Activated naive CD4-positive, alpha-beta T cell treated with anti-CD3 and anti-CD28 coated beads for 36 hours (primary cell): ENCODE measurements at regions of chr12 and their contacts with region 1.

Region 1: GRCh38 chr12:13196130-13196921 is at the start of gene EMP1:
- DNase-seq: peak; percentile 93
- H3K4me3 Mint-ChIP-seq: peak within 1 kb of the TSS; percentile 72
- H3K27ac Mint-ChIP-seq: peak within 1 kb of the TSS; percentile 38
- H3K4me1 Mint-ChIP-seq: peaks cover 20% of the 10 kb centered on the region
- H3K27me3 Mint-ChIP-seq: peaks cover 4% of the 10 kb centered on the region
- total RNA-seq, gene EMP1: 3.0 to 4.0 TPM

Region 2: DNA sequence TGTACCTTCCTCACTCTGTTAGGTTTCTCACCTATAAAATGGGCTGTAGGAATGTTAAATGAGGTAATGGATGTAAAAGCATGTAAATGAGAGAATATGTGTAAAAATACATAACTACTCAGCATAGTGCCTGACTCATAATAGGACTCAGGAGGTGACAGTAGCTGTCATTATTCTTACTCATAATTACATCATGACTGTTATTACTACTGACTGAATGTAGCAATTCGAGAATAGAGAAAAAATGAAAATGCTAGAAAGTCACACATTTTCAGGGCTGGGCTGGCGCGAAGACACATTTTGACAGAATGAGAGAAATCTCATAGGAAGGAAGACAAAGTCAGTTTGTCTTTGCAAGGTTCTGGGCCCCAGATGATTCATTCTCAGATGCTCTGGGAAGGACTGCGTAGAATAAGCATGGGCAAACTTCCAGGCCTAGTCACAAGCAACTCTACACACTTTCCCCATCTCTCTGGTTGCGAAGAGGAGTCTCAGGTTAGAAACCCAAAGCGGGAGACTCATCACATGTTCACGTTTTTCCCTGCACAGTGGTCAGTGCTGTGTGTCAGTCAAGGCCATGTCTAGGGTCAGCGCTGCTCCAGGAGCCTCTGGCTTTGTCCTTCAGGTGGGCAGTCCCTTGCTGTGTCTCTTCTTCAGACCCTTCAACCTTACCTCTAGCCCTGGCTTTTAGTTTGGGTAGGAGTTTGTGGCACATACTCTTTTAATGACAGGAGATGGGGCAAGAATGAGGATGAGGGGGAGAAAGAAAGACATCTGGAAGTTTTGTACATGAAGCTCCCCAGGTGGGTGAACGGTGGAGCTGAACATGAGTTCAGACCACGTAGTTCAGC is 296.6 kb before region 1 on chr12:
- CTCF ChIA-PET with region 1: no interaction called
- intact Hi-C with region 1: loop called (anchors 1 kb)
- DNase-seq: peak; percentile 91
- H3K4me3 Mint-ChIP-seq: no peak overlapping the region
- H3K27ac Mint-ChIP-seq: peak overlapping the region; percentile 90
- H3K4me1 Mint-ChIP-seq: peaks cover 31% of the 10 kb centered on the region
- H3K27me3 Mint-ChIP-seq: peaks cover 4% of the 10 kb centered on the region

Region 3: DNA sequence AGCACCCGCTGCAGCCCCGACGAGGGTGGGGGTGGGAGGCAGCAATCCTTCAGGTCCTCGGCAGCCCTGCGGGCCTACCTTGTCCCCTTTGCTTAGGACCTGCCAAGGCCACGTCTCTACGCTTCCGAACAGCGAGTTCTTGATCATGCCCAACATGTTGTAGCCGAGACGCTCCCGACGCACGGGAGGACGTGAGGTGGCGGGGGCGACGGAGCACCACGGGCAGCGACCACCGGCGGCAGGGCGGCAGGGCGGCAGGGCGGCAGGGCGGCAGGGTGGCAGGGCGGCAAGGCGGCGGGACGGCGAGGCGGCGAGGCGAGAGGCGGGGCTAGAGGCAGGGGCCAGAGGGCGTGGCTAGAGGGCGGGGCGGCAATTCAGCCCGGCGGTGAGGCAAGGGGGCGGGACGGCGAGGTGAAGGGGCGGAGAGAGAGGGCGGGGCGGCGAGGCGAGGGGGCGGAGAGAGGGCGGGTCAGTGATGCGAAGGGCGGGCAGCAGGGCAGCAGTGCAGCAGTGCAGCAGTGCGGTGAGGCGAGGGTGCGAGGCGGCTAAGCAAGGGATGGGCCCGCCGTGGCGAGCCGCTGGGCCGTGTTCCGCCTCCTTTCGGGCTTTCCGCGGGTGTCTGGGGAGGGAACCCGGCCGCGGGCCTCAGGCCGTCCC is 196.2 kb before region 1 on chr12 and contains the start of gene HEBP1:
- CTCF ChIA-PET with region 1: interaction called, 3 read pairs
- intact Hi-C with region 1: loop called (anchors 1 kb)
- DNase-seq: peak; percentile 97
- H3K4me3 Mint-ChIP-seq: peak within 1 kb of the TSS; percentile 77
- H3K27ac Mint-ChIP-seq: peak within 1 kb of the TSS; percentile 31
- H3K4me1 Mint-ChIP-seq: peaks cover 26% of the 10 kb centered on the region
- H3K27me3 Mint-ChIP-seq: peaks cover 6% of the 10 kb centered on the region
- total RNA-seq, gene HEBP1: 28.7 to 32.3 TPM

Region 4: GRCh38 chr12:13144266-13144828 is 52.0 kb before region 1 on chr12:
- CTCF ChIA-PET with region 1: no interaction called
- intact Hi-C with region 1: loop called (anchors 1 kb)
- DNase-seq: peak; percentile 27
- H3K4me3 Mint-ChIP-seq: no peak overlapping the region
- H3K27ac Mint-ChIP-seq: no peak overlapping the region
- H3K4me1 Mint-ChIP-seq: peaks cover 19% of the 10 kb centered on the region
- H3K27me3 Mint-ChIP-seq: no peaks in the 10 kb centered on the region

Region 5: DNA sequence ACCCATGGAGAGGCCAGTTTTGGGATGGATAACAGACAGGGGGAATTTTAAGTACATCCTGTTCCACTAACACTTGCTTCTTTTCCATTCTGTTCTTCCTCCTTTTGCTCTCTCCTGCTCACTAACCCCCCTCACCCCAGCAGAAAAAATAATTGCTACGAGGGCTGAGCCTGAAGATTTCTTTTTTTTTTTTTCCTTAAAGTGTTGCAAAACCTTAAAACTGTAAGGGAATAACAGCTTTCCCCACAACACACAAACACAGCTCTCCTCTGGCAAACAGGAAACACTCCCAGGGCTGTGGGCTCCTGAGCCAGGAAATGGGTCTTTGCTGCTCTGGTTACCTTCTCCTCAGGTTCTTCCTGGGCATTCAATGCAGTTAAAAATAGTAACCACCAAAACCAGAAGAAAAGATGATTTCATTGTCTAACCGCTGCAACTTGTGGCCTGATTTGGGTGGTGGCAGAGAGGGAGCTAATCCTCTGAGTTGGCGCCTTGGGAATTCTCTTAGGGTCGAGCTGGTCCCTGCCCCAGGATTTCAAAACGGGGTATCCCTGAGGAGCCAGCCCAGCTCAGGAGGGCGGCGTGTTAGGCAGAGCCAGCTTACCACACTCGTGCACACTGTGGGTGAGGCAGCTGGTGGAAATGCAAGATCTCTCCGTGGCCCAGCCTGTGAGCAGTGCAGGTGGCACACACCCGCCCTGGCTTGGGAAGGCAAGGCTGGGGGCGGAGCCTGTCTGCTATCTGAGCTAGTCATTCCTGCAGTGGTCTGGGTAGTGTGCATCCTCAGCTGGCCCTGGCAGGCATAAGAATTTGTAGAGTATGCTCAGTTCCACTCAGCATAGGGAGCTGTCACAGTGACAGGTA is 16.9 kb before region 1 on chr12:
- CTCF ChIA-PET with region 1: no interaction called
- intact Hi-C with region 1: loop called (anchors 1 kb)
- DNase-seq: peak; percentile 74
- H3K4me3 Mint-ChIP-seq: peak overlapping the region; percentile 37
- H3K27ac Mint-ChIP-seq: no peak overlapping the region
- H3K4me1 Mint-ChIP-seq: peaks cover 15% of the 10 kb centered on the region
- H3K27me3 Mint-ChIP-seq: no peaks in the 10 kb centered on the region